K562 (cell line): ENCODE measurements at regions of chr5 and their contacts with region 1.

Region 1: DNA sequence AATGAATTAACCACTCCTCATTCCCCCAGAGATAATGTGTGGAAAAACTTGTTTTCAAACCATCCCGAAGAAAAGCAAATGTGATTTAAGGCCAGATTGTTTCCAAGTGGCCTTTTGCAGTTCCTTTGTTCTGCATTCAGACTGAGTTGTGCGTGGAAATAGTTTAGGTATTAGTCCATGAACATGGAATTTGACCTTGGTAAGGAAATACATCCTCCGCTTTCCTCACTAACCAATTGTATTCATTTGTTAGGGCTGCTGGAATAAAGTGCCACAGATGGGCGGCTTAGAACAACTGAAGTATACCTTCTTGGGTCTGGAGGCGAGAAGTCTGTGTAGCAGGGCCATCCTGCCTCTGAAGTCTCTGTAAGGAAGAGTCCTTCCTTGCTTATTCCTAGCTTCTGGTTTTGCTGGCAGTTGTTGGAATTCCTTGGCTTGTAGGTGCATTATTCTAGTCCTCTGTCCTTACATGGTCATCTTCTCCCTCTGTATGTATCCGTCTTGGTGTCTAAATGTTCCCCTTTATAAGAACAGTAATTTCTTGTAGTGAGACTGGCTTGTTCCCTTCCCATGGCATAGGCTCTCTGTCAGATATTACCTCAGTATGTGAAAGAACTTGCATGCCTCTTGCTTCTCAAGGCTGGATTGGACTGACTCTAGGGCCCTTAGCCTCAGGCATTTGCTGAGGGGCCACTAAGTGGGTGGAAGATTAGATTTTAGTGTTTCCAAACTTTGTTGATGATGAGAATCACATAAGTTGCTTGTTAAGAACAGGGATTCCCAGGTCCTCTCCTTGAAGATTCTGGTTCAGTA is 53.9 kb downstream of the RAI14 start:
- DNase-seq: no peak
- ATAC-seq: peak; percentile 48
- H3K4me3 ChIP-seq: no peak overlapping the region
- H3K27ac ChIP-seq: no peak overlapping the region
- H3K4me1 ChIP-seq: peaks cover 5 to 11% of the 10 kb centered on the region in 2 experiments; a peak in 3 of 5 replicates
- H3K27me3 ChIP-seq: no peaks in the 10 kb centered on the region
- CTCF ChIP-seq: no peak
- EP300 ChIP-seq: no peak
- POLR2A ChIP-seq: no peak
- RAD21 ChIP-seq: no peak

Region 2: GRCh38 chr5:34695275-34696027 is 14.6 kb before region 1 on chr5:
- CTCF ChIA-PET with region 1: no interaction called
- POLR2A ChIA-PET with region 1: interaction called, 15 read pairs
- in situ Hi-C with region 1: no loop called
- intact Hi-C with region 1: no loop called
- DNase-seq: no peak
- ATAC-seq: peak; percentile 50
- H3K4me3 ChIP-seq: no peak overlapping the region
- H3K27ac ChIP-seq: 0 out of 3 replicates have a peak overlapping the region, but pooled peaks have one; percentile 5
- H3K4me1 ChIP-seq: peaks cover 19 to 48% of the 10 kb centered on the region in 2 experiments
- H3K27me3 ChIP-seq: no peaks in the 10 kb centered on the region
- CTCF ChIP-seq: no peak
- EP300 ChIP-seq: no peak
- POLR2A ChIP-seq: no peak
- RAD21 ChIP-seq: no peak